GM12878 (cell line): ENCODE measurements at regions of chr10 and their contacts with region 1.

Region 1: DNA sequence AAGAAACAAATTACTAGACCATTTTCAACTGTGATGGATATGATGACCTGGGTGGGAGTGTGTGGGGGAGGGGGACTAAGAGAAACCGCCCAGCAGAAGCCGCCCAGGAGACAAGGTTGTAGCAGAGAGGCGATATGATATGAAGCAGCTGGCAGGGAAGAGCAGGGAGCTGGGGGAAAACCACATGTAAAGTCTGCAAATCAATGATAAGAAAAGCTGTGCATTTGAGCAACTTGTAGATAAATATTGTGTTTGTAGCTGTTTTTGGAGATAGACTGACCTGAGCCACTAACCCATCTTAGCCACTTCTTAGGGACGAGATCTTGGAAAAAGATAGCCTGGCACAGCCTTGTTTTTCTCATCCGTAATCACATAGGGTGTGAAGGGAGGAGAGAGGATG is 252.6 kb downstream of the SEC23IP start:
- DNase-seq: no peak
- ATAC-seq: no peak
- H3K4me3 ChIP-seq: no peak overlapping the region
- H3K27ac ChIP-seq: no peak overlapping the region
- H3K4me1 ChIP-seq: no peaks in the 10 kb centered on the region
- H3K27me3 ChIP-seq: no peaks in the 10 kb centered on the region
- CTCF ChIP-seq: no peak
- EP300 ChIP-seq: no peak
- POLR2A ChIP-seq: no peak
- RAD21 ChIP-seq: no peak

Region 2: GRCh38 chr10:119981826-119982225 is 163.3 kb before region 1 on chr10:
- CTCF ChIA-PET with region 1: no interaction called
- POLR2A ChIA-PET with region 1: no interaction called
- RAD21 ChIA-PET with region 1: no interaction called
- SMC1A ChIA-PET with region 1: no interaction called
- in situ Hi-C with region 1: no loop called
- intact Hi-C with region 1: no loop called
- DNase-seq: no peak
- ATAC-seq: no peak
- H3K4me3 ChIP-seq: no peak overlapping the region
- H3K27ac ChIP-seq: no peak overlapping the region
- H3K4me1 ChIP-seq: no peaks in the 10 kb centered on the region
- H3K27me3 ChIP-seq: no peaks in the 10 kb centered on the region
- CTCF ChIP-seq: no peak
- EP300 ChIP-seq: no peak
- POLR2A ChIP-seq: no peak
- RAD21 ChIP-seq: no peak

Region 3: DNA sequence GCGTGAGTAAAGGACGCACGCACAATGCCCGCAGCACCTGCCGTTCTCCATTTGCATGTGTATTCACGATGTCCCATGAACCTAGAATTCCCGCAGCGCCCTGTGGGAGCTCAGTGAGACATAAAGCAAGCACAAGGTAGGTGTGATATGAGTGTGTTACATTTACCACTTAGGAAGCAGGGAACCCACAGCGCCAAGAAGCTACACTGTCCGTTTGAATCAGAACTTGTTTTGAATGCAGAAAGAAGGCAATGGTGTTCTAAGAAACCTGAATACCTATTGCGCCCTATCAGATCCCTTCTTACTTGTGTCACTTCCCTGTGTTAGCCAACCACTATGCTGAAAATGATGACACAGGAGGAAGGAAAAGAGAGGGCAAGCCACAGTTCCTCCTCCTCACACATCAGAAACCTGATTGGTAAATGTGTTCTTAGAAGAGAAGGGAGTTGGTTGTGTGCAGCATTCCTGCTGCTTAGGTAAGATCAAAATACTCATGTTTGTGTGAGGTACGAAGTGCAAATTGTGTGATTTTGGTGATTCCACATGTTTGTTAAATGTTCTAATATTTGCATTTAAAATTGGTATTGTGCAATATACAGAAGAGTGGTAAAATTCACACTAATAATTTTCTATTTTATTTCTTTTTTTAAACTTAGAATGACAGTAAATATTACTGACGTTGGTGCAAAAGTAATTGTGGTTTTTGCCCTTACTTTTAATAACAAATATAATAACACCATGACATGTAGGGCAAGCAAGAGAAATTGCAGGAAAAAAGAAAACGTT is 67.2 kb before region 1 on chr10:
- CTCF ChIA-PET with region 1: no interaction called
- POLR2A ChIA-PET with region 1: interaction called, 14 read pairs
- RAD21 ChIA-PET with region 1: no interaction called
- SMC1A ChIA-PET with region 1: no interaction called
- in situ Hi-C with region 1: no loop called
- intact Hi-C with region 1: no loop called
- DNase-seq: peak; percentile 9
- ATAC-seq: peak; percentile 43; the same call in 2 of the 3 replicates
- H3K4me3 ChIP-seq: no peak overlapping the region
- H3K27ac ChIP-seq: no peak overlapping the region
- H3K4me1 ChIP-seq: no peaks in the 10 kb centered on the region
- H3K27me3 ChIP-seq: 0 out of 4 replicates have a peak, but pooled peaks cover 0 to 3% of the 10 kb centered on the region in 2 experiments
- CTCF ChIP-seq: no peak
- EP300 ChIP-seq: no peak
- POLR2A ChIP-seq: no peak
- RAD21 ChIP-seq: no peak

Region 4: GRCh38 chr10:120115959-120116358 is 29.1 kb before region 1 on chr10:
- CTCF ChIA-PET with region 1: no interaction called
- POLR2A ChIA-PET with region 1: no interaction called
- RAD21 ChIA-PET with region 1: no interaction called
- SMC1A ChIA-PET with region 1: no interaction called
- in situ Hi-C with region 1: no loop called
- intact Hi-C with region 1: no loop called
- DNase-seq: no peak
- ATAC-seq: no peak
- H3K4me3 ChIP-seq: no peak overlapping the region
- H3K27ac ChIP-seq: no peak overlapping the region
- H3K4me1 ChIP-seq: no peaks in the 10 kb centered on the region
- H3K27me3 ChIP-seq: no peaks in the 10 kb centered on the region; a peak in 1 of 4 replicates
- CTCF ChIP-seq: no peak
- EP300 ChIP-seq: no peak
- POLR2A ChIP-seq: no peak
- RAD21 ChIP-seq: no peak

Region 5: DNA sequence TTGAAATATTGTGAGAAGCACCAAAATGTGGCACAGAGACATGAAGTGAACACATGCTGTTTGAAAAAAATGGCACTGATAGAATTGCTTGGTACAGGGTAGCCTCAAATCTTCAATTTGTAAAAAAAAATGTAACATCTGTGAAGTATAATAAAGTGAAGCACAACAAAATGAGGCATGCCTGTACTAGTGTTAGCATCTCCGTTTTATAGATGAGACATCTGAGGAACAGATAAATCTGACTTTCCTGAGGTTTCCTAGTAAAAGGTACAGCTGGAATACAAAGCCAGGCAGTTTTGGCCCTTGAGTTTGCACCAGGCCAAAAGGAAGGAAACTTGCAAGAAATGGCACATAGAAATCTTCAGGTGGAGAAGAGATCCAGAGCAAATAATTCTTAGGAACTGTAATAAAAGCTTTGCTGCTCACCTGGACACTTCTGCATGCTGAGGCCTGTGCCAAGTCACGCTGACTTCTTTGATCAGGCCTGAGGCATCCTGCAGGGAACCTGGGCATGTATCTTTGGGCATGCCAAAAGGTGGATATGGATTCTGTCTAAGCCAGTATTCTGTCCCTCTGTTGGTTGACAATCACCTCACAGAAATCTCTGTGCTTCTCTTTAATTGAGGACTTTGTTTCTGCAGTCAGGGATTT is 60.4 kb after region 1 on chr10:
- CTCF ChIA-PET with region 1: no interaction called
- POLR2A ChIA-PET with region 1: no interaction called
- RAD21 ChIA-PET with region 1: no interaction called
- SMC1A ChIA-PET with region 1: no interaction called
- in situ Hi-C with region 1: no loop called
- intact Hi-C with region 1: no loop called
- DNase-seq: no peak
- ATAC-seq: no peak
- H3K4me3 ChIP-seq: no peak overlapping the region
- H3K27ac ChIP-seq: no peak overlapping the region
- H3K4me1 ChIP-seq: no peaks in the 10 kb centered on the region
- H3K27me3 ChIP-seq: no peaks in the 10 kb centered on the region; a peak in 1 of 4 replicates
- CTCF ChIP-seq: no peak
- EP300 ChIP-seq: no peak
- POLR2A ChIP-seq: no peak
- RAD21 ChIP-seq: no peak